Thyroid gland (tissue), 4 donors: ENCODE measurements at regions of chr13 and their contacts with region 1.

Region 1: DNA sequence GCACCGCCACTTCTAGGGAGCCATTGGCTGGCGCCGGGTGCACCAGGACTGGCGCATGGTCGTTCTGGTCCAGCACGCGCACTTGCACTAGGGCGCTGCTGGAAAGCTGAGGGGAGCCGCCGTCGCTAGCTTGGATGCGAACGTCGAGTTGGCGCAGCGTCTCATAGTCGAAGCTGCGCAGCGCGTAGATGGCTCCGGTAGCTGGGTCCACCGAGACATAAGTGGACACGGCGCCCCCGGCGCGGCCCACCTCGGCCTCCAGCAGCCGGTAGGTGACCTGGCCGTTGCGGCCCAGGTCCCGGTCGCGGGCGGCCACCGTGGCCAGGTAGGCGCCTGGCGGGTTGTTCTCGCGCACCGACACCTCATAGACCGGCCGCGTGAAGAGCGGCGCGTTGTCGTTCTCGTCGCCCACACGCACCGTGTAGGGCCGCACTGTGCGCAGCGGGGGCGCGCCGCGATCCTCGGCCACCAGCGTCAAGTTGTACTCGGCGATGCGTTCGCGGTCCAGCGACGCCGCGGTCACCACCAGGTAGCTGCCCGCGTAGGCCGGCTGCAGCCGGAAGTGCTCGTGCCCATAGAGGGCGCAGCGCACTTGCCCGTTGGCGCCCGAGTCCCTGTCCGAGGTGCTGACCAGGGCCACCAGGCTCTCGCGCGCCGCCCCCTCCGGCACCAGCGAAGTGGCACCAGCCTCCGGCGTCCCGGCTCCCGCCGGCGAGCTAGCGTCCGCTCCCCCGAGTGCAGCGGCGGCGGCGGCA is 1.7 kb downstream of the PCDH8 start:
- DNase-seq: peak; percentile 88 to 90
- H3K4me3 ChIP-seq: peak overlapping the region in 1 of 3 donors; percentile 36
- H3K27ac ChIP-seq: no peak overlapping the region
- H3K4me1 ChIP-seq: peaks cover 10 to 26% of the 10 kb centered on the region in 2 donors
- H3K27me3 ChIP-seq: peaks cover 26% of the 10 kb centered on the region
- CTCF ChIP-seq: peak in 5 of 6 experiments; percentile 36 to 82 (median 72)
- POLR2A ChIP-seq: no peak

Region 2: DNA sequence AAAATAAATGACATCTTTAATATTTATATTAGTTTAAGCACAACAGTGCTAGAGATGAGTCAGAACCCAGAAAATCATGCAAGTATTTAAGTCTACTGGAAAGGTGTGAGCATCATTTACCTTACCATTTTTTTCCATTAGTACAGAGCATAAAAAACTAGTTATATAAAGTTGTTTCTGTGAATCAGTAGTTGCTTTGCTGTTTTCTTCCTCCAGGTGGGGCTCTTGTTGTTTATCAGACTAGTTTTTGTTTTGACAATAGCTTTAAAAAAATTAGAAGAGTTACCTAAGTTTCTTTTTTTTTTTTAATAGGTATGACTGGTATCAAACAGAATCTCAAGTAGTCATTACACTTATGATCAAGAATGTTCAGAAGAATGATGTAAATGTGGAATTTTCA is 181.4 kb before region 1 on chr13:
- intact Hi-C with region 1: loop called (anchors 10 kb)
- DNase-seq: no peak
- H3K4me3 ChIP-seq: no peak overlapping the region
- H3K27ac ChIP-seq: no peak overlapping the region
- H3K4me1 ChIP-seq: no peaks in the 10 kb centered on the region
- H3K27me3 ChIP-seq: no peaks in the 10 kb centered on the region
- CTCF ChIP-seq: peak in 3 of 6 experiments; percentile 45 to 65 (median 47)
- POLR2A ChIP-seq: no peak

Region 3: DNA sequence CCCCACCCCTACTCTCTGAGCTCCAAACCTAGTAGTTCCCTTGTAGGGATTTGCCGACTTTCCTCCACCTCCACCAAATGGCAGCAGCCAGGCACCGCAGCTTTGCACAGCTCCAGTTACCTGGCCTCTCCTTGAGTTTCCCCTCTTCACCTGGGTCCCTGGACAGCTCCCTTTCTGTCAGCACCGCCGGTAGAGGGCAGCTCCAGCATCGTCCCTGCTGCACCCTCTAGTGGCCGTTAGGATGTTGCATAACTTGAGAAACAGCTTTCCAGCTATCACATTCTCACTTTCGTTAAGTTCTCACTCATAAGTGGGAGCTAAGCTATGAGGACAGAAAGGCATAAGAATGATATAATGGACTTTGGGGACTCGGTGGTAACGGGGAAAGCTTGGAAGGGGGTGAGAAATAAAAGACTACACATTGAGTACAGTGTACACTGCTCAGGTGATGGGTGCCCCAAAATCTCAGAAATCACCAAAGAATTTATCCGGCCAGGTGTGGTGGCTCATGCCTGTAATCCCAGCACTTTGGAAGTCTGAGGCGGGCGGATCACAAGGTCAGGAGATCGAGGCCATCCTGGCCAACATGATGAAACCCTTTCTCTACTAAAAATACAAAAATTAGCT is 121.4 kb after region 1 on chr13:
- intact Hi-C with region 1: loop called (anchors 5 kb)
- DNase-seq: peak; percentile 89 to 93
- H3K4me3 ChIP-seq: no peak overlapping the region
- H3K27ac ChIP-seq: no peak overlapping the region
- H3K4me1 ChIP-seq: peaks cover 0 to 3% of the 10 kb centered on the region in 2 donors
- H3K27me3 ChIP-seq: no peaks in the 10 kb centered on the region
- CTCF ChIP-seq: peak; percentile 85 to 100 (median 94)
- POLR2A ChIP-seq: no peak

Region 4: DNA sequence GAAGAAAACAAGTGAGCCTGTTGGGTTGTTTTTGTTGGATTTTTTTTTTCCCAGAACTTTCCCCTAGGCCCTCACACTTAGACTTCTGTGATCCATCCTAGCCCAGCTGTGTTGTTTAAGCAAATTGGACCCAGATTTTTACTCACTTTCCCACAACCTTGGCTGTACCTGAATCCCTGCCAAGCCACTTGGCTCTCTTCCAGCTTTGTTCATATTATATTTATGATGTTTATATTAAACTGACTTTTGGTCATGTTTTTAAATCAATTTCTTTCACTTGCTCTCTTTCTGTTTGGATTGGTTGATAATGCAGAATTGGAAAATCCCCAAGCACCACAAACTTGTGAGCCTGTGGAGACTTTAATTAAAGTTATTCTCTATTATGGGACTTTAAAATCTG is 198.4 kb after region 1 on chr13:
- intact Hi-C with region 1: no loop called
- DNase-seq: peak in 1 of 2 donors; percentile 14
- H3K4me3 ChIP-seq: no peak overlapping the region
- H3K27ac ChIP-seq: peak overlapping the region in 1 of 3 donors; percentile 58
- H3K4me1 ChIP-seq: peaks cover 29 to 36% of the 10 kb centered on the region in 2 donors
- H3K27me3 ChIP-seq: no peaks in the 10 kb centered on the region
- CTCF ChIP-seq: no peak
- POLR2A ChIP-seq: no peak

Region 5: GRCh38 chr13:53200498-53201453 is 354.0 kb after region 1 on chr13:
- intact Hi-C with region 1: loop called (anchors 5 kb)
- DNase-seq: peak; percentile 82 to 85
- H3K4me3 ChIP-seq: no peak overlapping the region
- H3K27ac ChIP-seq: no peak overlapping the region
- H3K4me1 ChIP-seq: peaks cover 0 to 13% of the 10 kb centered on the region in 2 donors
- H3K27me3 ChIP-seq: no peaks in the 10 kb centered on the region
- CTCF ChIP-seq: peak; percentile 43 to 89 (median 58)
- POLR2A ChIP-seq: no peak